Endothelial cell of umbilical vein (primary cell): ENCODE measurements at regions of chr4 and their contacts with region 1.

Region 1: GRCh38 chr4:144611846-144612245 is 34.1 kb upstream of the HHIP start:
- DNase-seq: peak; percentile 36
- H3K4me3 ChIP-seq: no peak overlapping the region
- H3K27ac ChIP-seq: no peak overlapping the region
- H3K4me1 ChIP-seq: peaks cover 9% of the 10 kb centered on the region
- H3K27me3 ChIP-seq: no peaks in the 10 kb centered on the region
- CTCF ChIP-seq: peak; percentile 48 to 66
- POLR2A ChIP-seq: no peak

Region 2: DNA sequence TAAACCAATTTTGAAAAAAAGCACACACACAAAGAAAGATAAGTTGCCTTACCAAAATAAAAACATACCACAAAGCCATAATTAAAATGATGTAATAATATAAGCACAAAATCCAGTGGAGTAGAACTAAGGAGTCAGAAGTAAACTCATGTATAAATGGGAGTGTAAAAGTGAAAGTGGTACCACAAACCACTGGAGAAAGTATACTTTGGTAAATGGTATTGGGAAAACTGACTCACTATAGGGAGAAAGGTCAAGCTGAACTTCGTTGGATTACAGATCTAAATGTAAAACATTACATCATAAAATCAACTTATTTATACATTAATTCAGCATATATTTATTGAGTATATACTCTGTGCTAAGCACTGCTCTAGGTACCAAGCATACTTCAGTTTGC is 12.2 kb before region 1 on chr4:
- CTCF ChIA-PET with region 1: interaction called, 5 read pairs
- POLR2A ChIA-PET with region 1: no interaction called
- dilution Hi-C with region 1: no loop called
- intact Hi-C with region 1: loop called (anchors 2 kb)
- DNase-seq: peak; percentile 48
- H3K4me3 ChIP-seq: no peak overlapping the region
- H3K27ac ChIP-seq: no peak overlapping the region
- H3K4me1 ChIP-seq: peaks cover 7% of the 10 kb centered on the region
- H3K27me3 ChIP-seq: no peaks in the 10 kb centered on the region
- CTCF ChIP-seq: no peak
- POLR2A ChIP-seq: no peak

Region 3: DNA sequence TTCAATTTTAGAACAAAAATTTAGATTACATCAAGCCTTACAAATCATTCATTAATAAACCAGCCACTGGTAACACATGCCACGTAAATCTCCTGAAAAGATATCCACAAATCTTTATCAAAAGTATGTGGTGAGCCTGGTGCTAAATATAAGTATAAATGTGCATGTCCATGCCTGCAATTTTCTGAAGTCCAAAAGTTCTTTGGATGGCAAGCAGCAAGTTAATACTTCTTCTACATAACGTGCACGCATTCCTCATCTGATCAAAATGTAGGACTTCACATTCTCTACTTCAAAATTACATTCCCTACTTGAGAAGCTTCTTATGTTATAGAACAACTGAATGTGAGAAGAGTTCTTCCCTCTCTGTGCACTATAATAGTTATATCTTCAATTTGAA is 83.9 kb after region 1 on chr4:
- CTCF ChIA-PET with region 1: no interaction called
- POLR2A ChIA-PET with region 1: no interaction called
- dilution Hi-C with region 1: no loop called
- intact Hi-C with region 1: no loop called
- DNase-seq: no peak
- H3K4me3 ChIP-seq: no peak overlapping the region
- H3K27ac ChIP-seq: no peak overlapping the region
- H3K4me1 ChIP-seq: peaks cover 63% of the 10 kb centered on the region
- H3K27me3 ChIP-seq: no peaks in the 10 kb centered on the region
- CTCF ChIP-seq: no peak
- POLR2A ChIP-seq: peak; percentile 25

Region 4: GRCh38 chr4:145180298-145181090 is 568.6 kb after region 1 on chr4 and contains the start of gene OTUD4:
- CTCF ChIA-PET with region 1: no interaction called
- POLR2A ChIA-PET with region 1: no interaction called
- dilution Hi-C with region 1: no loop called
- intact Hi-C with region 1: no loop called
- DNase-seq: peak; percentile 96
- H3K4me3 ChIP-seq: peak within 1 kb of the TSS; percentile 78 to 93 (median 92)
- H3K27ac ChIP-seq: peak within 1 kb of the TSS; percentile 78
- H3K4me1 ChIP-seq: peaks cover 18% of the 10 kb centered on the region
- H3K27me3 ChIP-seq: no peaks in the 10 kb centered on the region
- CTCF ChIP-seq: peak in 1 of 2 donors; percentile 25
- POLR2A ChIP-seq: no peak
- total RNA-seq, gene OTUD4: 39.5 and 40.9 TPM in 2 replicates

Region 5: DNA sequence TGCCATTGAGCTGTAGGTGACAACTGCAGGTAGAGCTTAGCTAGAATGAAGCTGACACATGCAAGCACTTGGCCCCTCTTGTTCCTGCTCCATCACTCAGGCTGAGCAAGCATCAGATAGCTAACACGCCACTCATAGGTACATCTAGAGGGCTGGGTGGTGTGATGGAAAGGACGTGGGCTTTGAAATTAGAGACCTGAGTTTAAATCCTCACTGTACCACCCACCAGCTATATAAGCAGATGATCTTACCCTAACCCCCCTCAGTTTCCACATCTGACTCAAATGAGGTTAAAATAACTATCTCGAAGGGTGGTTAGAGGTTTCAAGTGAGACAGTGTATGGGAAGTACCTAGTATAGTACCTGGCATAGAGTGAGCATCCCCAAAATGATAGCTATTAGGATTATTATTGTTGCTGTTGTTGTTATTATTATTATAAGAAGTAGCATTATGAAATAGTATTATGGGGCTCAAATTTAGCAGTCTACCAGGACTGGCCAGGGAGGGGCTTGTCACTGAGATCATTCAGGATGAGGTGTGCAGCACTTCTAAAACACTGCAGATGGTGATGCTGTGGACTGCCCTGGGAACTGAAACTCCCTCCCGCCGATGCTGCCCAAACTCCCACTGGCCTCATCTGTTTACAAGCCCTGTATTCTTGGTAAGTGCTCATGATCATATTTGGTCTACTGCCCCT is 1661.5 kb after region 1 on chr4:
- CTCF ChIA-PET with region 1: no interaction called
- POLR2A ChIA-PET with region 1: no interaction called
- dilution Hi-C with region 1: no loop called
- intact Hi-C with region 1: no loop called
- DNase-seq: no peak
- H3K4me3 ChIP-seq: no peak overlapping the region
- H3K27ac ChIP-seq: no peak overlapping the region
- H3K4me1 ChIP-seq: no peaks in the 10 kb centered on the region
- H3K27me3 ChIP-seq: no peaks in the 10 kb centered on the region
- CTCF ChIP-seq: no peak
- POLR2A ChIP-seq: no peak